Naive thymus-derived CD4-positive, alpha-beta T cell (primary cell): ENCODE measurements at regions of chr2 and their contacts with region 1.

Region 1: DNA sequence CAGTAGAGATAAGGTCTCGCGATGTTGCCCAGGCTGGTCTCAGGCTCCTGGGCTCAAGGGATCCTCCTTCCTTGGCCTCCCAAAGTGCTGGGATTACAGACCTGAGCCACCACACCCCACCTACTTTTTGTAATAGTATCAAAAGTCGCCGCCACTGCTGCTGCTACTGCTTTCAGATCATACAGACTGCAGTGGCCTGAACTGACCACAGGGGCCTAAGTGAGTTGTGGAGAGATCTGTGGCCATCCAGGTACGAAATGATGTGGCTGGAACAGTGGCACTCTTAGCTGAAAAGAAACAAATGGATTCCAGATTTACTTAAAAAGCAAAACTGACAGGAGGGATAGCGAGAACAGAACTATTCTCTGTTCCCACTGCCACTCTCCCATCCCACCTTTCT is 32.9 kb upstream of the POMC start:
- DNase-seq: no peak
- ATAC-seq: no peak
- H3K4me3 ChIP-seq: no peak overlapping the region
- H3K4me3 Mint-ChIP-seq: no peak overlapping the region
- H3K27ac ChIP-seq: no peak overlapping the region
- H3K27ac Mint-ChIP-seq: peak overlapping the region in 1 of 9 donors; percentile 33
- H3K4me1 ChIP-seq: peaks cover 0 to 7% of the 10 kb centered on the region in 2 donors
- H3K4me1 Mint-ChIP-seq: peaks cover under 1 to 17% (median 14%) of the 10 kb centered on the region in 7 donors
- H3K27me3 ChIP-seq: no peaks in the 10 kb centered on the region
- H3K27me3 Mint-ChIP-seq: peaks cover 0 to 18% (median 0%) of the 10 kb centered on the region in 5 donors

Region 2: DNA sequence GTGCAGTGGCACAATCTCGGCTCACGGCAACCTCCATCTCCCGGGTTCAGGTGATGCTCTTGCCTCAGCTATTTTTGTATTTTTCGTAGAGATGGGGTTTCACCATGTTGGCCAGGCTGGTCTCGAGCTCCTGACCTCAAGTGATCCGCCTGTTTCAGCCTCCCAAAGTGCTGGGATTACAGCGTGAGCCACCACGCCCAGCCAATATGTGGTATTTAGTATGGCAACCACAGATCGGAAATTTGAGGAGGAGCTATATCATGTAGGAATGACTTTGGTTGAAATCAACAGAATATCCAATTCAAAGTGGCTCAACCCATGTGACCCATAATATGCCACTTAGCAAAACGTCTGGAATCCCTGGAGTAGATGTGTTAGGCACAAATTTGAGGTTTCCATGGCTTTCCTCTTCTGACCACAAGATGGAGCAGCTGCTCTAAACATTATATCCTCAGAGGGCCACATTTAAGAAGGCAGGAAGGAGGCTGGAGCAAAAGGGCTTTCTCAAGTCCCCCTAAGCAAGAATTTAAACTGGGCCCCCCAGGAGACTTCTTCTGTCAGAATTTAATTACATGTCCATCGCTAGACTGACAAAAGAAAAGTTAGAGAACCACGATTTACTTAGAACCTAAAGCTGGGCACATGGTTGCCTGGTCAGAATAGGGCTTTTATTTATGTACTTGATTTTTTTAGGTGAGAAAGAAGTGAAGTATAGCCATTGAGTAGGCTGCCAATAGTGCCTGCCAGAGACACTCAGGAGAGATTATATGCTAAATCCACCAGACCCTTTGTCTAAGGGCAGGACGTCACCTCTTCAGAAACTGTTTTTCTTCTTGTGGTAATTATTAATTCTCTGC is 791.3 kb before region 1 on chr2:
- CTCF ChIA-PET with region 1: no interaction called
- POLR2A ChIA-PET with region 1: no interaction called
- intact Hi-C with region 1: loop called (anchors 1 to 2 kb)
- DNase-seq: peak in 7 of 9 donors; percentile 19 to 59 (median 51)
- ATAC-seq: peak; percentile 79
- H3K4me3 ChIP-seq: no peak overlapping the region
- H3K4me3 Mint-ChIP-seq: no peak overlapping the region
- H3K27ac ChIP-seq: no peak overlapping the region
- H3K27ac Mint-ChIP-seq: no peak overlapping the region
- H3K4me1 ChIP-seq: no peaks in the 10 kb centered on the region
- H3K4me1 Mint-ChIP-seq: no peaks in the 10 kb centered on the region
- H3K27me3 ChIP-seq: no peaks in the 10 kb centered on the region
- H3K27me3 Mint-ChIP-seq: peaks cover 2 to 19% (median 6%) of the 10 kb centered on the region in 5 donors

Region 3: DNA sequence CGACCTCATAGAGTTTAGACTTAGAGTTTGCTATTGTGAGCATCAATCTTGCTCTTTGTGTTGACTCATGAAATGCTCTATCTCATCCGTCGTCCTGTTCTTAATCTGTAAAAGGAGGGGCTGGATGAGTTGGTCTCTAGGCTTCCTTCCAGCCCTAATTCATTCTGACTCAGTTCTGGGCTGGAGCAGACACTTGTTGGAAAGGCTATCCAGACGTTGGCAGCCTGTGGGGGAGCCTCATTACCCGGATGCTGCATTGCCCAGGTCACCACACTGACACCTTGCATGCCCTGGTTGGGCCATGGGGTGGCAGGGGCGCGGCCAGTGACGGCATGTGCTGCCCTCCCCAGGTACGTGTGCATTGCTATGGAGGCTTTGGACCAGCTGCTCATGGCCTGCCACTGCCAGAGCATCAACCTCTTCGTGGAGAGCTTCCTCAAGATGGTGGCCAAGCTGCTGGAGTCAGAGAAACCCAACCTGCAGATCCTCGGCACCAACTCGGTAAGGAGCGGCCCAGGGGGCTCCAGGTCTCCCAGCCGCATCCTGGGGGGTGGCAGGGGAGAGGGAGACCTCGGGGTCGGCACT is 97.9 kb before region 1 on chr2:
- CTCF ChIA-PET with region 1: no interaction called
- POLR2A ChIA-PET with region 1: no interaction called
- intact Hi-C with region 1: no loop called
- DNase-seq: no peak
- ATAC-seq: no peak
- H3K4me3 ChIP-seq: no peak overlapping the region
- H3K4me3 Mint-ChIP-seq: no peak overlapping the region
- H3K27ac ChIP-seq: no peak overlapping the region
- H3K27ac Mint-ChIP-seq: no peak overlapping the region
- H3K4me1 ChIP-seq: no peaks in the 10 kb centered on the region
- H3K4me1 Mint-ChIP-seq: no peaks in the 10 kb centered on the region
- H3K27me3 ChIP-seq: no peaks in the 10 kb centered on the region
- H3K27me3 Mint-ChIP-seq: peaks cover 0 to 2% (median 0%) of the 10 kb centered on the region in 5 donors

Region 4: GRCh38 chr2:25131567-25132298 is 69.5 kb before region 1 on chr2:
- CTCF ChIA-PET with region 1: interaction called, 3 read pairs
- POLR2A ChIA-PET with region 1: no interaction called
- intact Hi-C with region 1: loop called (anchors 1 to 2 kb)
- DNase-seq: peak in 1 of 9 donors; percentile 32
- ATAC-seq: peak; percentile 44
- H3K4me3 ChIP-seq: no peak overlapping the region
- H3K4me3 Mint-ChIP-seq: peak overlapping the region; percentile 20 to 82 (median 74)
- H3K27ac ChIP-seq: no peak overlapping the region
- H3K27ac Mint-ChIP-seq: peak overlapping the region in 1 of 9 donors; percentile 62
- H3K4me1 ChIP-seq: peaks cover 0 to 6% of the 10 kb centered on the region in 2 donors
- H3K4me1 Mint-ChIP-seq: peaks cover 6 to 16% (median 12%) of the 10 kb centered on the region in 7 donors
- H3K27me3 ChIP-seq: peaks cover 0 to 17% of the 10 kb centered on the region in 2 donors
- H3K27me3 Mint-ChIP-seq: peaks cover 52 to 65% (median 58%) of the 10 kb centered on the region in 5 donors

Region 5: GRCh38 chr2:25165992-25166875 is 35.0 kb before region 1 on chr2:
- CTCF ChIA-PET with region 1: interaction called, 6 read pairs
- POLR2A ChIA-PET with region 1: interaction called, 7 read pairs
- intact Hi-C with region 1: loop called (anchors 1 kb)
- DNase-seq: peak in 7 of 9 donors; percentile 12 to 46 (median 40)
- ATAC-seq: peak; percentile 69
- H3K4me3 ChIP-seq: no peak overlapping the region
- H3K4me3 Mint-ChIP-seq: peak overlapping the region in 7 of 10 donors; percentile 15 to 83 (median 68)
- H3K27ac ChIP-seq: no peak overlapping the region
- H3K27ac Mint-ChIP-seq: peak overlapping the region in 2 of 9 donors; percentile 2 to 69
- H3K4me1 ChIP-seq: no peaks in the 10 kb centered on the region
- H3K4me1 Mint-ChIP-seq: peaks cover 6 to 36% (median 26%) of the 10 kb centered on the region in 7 donors
- H3K27me3 ChIP-seq: no peaks in the 10 kb centered on the region
- H3K27me3 Mint-ChIP-seq: peaks cover 11 to 73% (median 35%) of the 10 kb centered on the region in 5 donors

Region 6: GRCh38 chr2:25215948-25216679 is 14.8 kb after region 1 on chr2:
- CTCF ChIA-PET with region 1: no interaction called
- POLR2A ChIA-PET with region 1: interaction called, 13 read pairs
- intact Hi-C with region 1: loop called in 1 of 2 experiments (anchors 2 kb)
- DNase-seq: peak; percentile 73 to 88 (median 85)
- ATAC-seq: peak; percentile 96
- H3K4me3 ChIP-seq: peak overlapping the region; percentile 61
- H3K4me3 Mint-ChIP-seq: peak overlapping the region; percentile 71 to 88 (median 78)
- H3K27ac ChIP-seq: peak overlapping the region; percentile 74
- H3K27ac Mint-ChIP-seq: peak overlapping the region; percentile 64 to 94 (median 89)
- H3K4me1 ChIP-seq: peaks cover 0 to 6% of the 10 kb centered on the region in 2 donors
- H3K4me1 Mint-ChIP-seq: peaks cover 9 to 33% (median 18%) of the 10 kb centered on the region in 7 donors
- H3K27me3 ChIP-seq: no peaks in the 10 kb centered on the region
- H3K27me3 Mint-ChIP-seq: no peaks in the 10 kb centered on the region